T-cell (primary cell): ENCODE measurements at regions of chr2 and their contacts with region 1.

Region 1: DNA sequence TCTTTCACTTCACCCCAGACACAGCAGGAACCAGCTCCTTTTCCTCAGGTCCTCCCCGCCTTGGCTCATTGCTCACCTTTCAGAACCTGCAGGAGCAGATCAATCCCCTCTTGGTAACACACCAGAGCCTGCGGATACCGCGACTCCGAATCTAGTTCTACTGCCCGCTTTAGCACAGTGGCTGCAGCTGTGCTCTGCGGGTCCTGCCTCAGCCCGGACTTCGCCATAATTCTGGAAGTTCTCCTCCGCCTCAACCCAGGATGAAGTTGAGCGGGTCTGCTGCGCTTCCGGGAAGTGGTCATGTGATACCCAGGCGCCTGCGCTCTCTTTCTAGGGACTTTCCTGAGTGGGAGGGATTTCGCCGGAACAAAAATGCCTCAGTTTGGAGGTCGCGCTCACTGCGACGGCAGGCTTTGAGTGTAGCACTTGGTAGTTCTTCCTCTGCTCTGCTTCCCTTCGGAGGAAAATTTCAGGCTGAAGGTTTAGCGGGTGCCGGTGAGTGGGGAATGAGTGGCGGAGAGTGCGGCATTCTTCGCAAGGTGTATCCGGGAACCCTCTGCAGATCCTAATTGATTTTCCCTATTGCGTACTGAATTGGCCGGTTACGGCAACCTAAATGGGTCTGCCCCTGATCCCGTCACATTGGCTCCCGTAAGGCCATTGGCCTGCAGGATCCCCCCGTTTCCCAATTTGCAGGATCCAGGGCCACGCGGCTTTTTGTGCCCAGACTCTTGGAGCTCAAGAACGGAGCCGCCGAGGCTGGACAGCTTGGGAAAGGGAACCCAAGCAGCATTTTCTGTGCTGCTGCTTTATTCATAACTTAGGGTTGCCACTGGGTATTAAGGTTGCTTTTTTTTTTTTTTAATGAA is at the starts of genes MITD1 and MRPL30:
- DNase-seq: peak; percentile 82 to 96 (median 88)
- ATAC-seq: peak; percentile 94 to 96 (median 96)
- H3K4me3 ChIP-seq: peak within 1 kb of the TSS; percentile 89 to 99
- H3K4me3 Mint-ChIP-seq: peak within 1 kb of the TSS; percentile 92 to 99 (median 95)
- H3K27ac ChIP-seq: peak within 1 kb of the TSS; percentile 82
- H3K27ac Mint-ChIP-seq: peak within 1 kb of the TSS; percentile 97 to 98
- H3K4me1 ChIP-seq: peaks cover 24 to 27% of the 10 kb centered on the region in 2 experiments
- H3K4me1 Mint-ChIP-seq: peaks cover 61 to 75% (median 72%) of the 10 kb centered on the region in 3 donors
- H3K27me3 ChIP-seq: no peaks in the 10 kb centered on the region
- H3K27me3 Mint-ChIP-seq: no peaks in the 10 kb centered on the region
- total RNA-seq, gene MITD1: 27.5 to 60.4 (median 56.7) TPM
- total RNA-seq, gene MRPL30: 12.7 to 20.5 (median 17.9) TPM

Region 2: DNA sequence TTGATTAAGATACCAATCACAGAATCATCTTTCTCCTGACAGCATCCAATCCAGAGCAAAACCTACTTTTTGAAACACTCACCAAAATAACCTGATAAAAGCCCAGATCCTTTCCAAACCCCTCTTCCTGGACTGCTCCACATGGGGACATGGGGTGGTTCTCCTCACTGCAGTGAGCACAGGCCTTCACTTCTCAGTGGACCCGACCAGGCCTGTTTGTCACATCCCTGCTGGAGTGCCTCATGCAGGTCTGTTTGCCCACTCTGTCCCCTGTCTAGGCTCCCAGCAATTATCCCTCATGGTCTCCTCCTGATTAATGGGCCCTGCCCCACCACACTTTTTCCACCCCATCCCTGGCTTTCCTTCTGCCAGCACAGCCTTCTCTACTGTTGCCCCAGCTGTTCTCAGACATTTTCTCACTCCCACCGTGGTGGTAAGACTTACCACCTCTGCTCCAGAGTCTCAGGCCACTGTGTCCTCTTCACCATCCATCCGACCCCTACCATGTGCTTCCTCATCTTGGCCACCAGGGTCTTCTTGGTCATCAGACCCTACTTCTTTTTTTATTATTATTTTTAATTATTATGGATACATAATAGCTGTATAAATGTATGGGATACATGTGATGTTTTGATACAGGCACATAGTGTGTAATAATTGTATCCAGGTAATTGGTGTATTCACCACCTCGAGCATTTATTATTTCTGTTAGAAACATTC is 21.1 kb after region 1 on chr2:
- CTCF ChIA-PET with region 1: no interaction called
- POLR2A ChIA-PET with region 1: no interaction called
- DNase-seq: no peak
- ATAC-seq: no peak
- H3K4me3 ChIP-seq: no peak overlapping the region
- H3K4me3 Mint-ChIP-seq: no peak overlapping the region
- H3K27ac ChIP-seq: no peak overlapping the region
- H3K27ac Mint-ChIP-seq: peak overlapping the region in 1 of 2 donors; percentile 0
- H3K4me1 ChIP-seq: no peaks in the 10 kb centered on the region
- H3K4me1 Mint-ChIP-seq: no peaks in the 10 kb centered on the region
- H3K27me3 ChIP-seq: no peaks in the 10 kb centered on the region
- H3K27me3 Mint-ChIP-seq: no peaks in the 10 kb centered on the region

Region 3: GRCh38 chr2:99337113-99338028 is 156.4 kb after region 1 on chr2 and contains the start of gene EIF5B:
- CTCF ChIA-PET with region 1: interaction called in 1 of 2 experiments, 10 read pairs
- POLR2A ChIA-PET with region 1: interaction called in 1 of 2 experiments, 3 read pairs
- DNase-seq: peak; percentile 81 to 95 (median 86)
- ATAC-seq: peak; percentile 71 to 81 (median 79)
- H3K4me3 ChIP-seq: peak within 1 kb of the TSS; percentile 83 to 99
- H3K4me3 Mint-ChIP-seq: no peak within 1 kb of the TSS
- H3K27ac ChIP-seq: peak within 1 kb of the TSS; percentile 70
- H3K27ac Mint-ChIP-seq: no peak within 1 kb of the TSS
- H3K4me1 ChIP-seq: peaks cover 17 to 19% of the 10 kb centered on the region in 2 experiments
- H3K4me1 Mint-ChIP-seq: peaks cover 44 to 49% (median 45%) of the 10 kb centered on the region in 3 donors
- H3K27me3 ChIP-seq: no peaks in the 10 kb centered on the region
- H3K27me3 Mint-ChIP-seq: no peaks in the 10 kb centered on the region
- total RNA-seq, gene EIF5B: 32.0 to 44.8 (median 34.2) TPM